Endothelial cell of umbilical vein (primary cell): ENCODE measurements at regions of chr1 and their contacts with region 1.

Region 1: DNA sequence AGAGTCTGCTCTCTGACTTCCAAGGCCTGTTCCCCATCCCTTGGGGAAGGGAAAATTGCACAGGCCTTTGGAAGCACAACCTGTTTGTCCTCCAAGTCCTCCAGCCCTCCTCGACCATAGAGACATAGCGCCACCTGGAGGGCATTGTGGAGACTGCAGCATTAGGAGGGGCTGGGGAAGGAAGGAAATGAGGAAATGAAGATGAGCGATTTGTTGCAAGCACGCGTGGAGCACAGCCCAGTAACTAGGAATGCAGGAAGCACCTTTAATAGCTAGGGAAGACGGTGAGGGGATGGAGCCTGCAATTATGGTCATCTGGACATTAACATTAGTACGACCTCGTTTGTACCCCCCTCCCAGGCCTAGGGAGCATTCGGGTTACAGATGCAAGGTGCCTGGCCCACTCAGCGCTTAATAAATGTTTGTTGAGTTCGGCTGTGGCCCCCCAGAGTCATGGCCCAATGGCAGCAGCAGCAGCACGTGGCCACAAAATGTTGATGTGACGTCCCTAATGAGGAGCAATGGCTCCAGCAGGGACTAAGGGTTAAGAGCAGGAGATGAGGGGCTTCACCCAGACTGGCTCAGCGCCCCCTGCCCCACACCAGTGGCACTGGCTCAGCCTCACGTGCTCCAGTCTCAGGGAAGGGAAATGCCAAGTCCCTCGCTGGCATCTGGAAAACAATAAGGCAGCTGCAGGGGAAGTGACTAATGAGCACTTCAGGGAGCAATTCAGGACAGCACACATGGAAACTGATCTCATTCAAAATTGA is 8.0 kb upstream of the CAMK2N1 start:
- DNase-seq: peak; percentile 98
- H3K4me3 ChIP-seq: peak overlapping the region in 1 of 3 experiments; percentile 13
- H3K27ac ChIP-seq: peak overlapping the region; percentile 90
- H3K4me1 ChIP-seq: peaks cover 23% of the 10 kb centered on the region
- H3K27me3 ChIP-seq: no peaks in the 10 kb centered on the region
- CTCF ChIP-seq: peak; percentile 89 to 96
- POLR2A ChIP-seq: no peak

Region 2: DNA sequence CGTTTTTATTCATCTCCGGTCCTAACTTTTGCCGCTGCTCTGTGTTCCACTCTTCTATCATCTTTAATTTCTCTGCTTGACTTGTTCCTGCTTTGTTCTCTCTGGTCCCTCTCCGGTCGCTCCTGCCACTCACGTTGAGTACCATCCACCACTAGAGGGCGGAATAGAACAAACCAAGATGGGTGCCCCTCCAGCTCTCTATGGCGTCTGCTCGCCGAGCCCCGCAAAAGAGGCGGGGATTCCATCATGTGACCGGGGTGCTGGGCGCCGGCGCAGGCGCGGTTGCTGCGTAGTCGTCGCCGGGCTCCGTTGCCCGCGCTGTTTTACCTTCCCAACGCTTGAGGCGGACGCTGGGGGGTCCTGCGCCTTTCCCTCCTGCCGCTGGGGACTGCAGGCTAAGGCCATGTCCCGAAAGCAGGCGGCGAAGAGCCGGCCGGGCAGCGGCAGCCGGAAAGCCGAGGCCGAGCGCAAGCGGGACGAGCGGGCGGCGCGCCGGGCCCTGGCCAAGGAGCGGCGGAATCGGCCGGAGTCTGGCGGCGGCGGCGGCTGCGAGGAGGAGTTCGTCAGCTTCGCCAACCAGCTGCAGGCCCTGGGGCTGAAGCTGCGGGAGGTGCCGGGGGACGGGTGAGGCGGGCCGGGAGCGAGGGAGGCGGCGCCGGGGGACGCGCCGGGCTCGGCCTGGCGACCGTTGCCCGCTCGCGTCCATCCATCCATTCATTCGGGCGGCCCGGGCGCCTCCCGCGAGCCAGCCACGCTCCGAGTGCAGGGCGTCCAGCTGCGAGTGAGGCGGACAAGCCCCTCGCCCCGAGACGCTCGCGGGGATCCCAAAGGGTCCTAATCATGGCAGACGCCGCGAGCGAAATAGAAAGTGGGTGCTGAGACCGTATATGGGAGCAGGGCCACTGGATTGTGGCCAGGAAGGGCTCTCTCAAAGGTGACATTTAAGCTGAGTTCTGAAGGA is 611.6 kb before region 1 on chr1 and contains the start of gene OTUD3:
- CTCF ChIA-PET with region 1: interaction called, 6 read pairs
- POLR2A ChIA-PET with region 1: no interaction called
- dilution Hi-C with region 1: no loop called
- intact Hi-C with region 1: loop called (anchors 10 kb)
- DNase-seq: peak; percentile 98
- H3K4me3 ChIP-seq: peak within 1 kb of the TSS; percentile 71 to 97 (median 94)
- H3K27ac ChIP-seq: peak within 1 kb of the TSS; percentile 84
- H3K4me1 ChIP-seq: peaks cover 15% of the 10 kb centered on the region
- H3K27me3 ChIP-seq: peaks cover 0 to 2% of the 10 kb centered on the region in 2 experiments
- CTCF ChIP-seq: peak; percentile 87 to 98
- POLR2A ChIP-seq: peak; percentile 70
- total RNA-seq, gene OTUD3: 8.1 and 10.6 TPM in 2 replicates

Region 3: DNA sequence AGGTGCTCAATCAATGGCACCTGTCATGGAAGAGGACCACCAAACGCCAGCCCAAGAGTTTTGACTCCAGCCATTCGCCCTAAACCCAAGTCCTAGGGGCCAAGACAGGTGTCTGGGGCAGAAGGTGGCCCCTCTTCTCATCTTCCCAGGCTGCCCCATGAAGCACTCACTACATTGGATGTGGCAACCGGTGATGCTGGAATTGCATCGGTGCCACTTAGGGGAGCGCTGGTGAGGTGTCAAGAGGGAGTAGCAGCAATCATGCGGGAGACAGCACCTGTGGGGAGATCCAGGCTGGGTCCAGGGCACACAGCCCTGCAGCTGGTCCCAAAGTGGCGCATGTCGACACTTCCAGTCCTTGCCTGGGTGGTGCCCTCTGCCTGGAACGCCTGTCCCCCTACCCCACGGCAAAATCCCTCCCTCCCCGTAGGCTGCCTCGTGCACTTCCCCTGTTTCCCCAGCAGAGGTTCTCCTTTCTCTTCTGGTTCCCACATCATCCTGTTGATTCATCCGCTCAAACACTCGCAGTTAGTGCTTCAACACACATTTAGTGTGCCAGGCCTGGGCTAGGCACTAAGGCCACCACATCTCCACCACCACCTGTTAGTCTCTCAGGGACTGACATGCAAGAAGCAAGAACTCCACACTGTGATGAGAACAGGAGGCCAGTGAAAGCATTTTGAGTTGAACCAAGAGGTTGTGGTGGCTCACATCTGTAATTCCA is 393.2 kb before region 1 on chr1:
- CTCF ChIA-PET with region 1: interaction called, 3 read pairs
- POLR2A ChIA-PET with region 1: no interaction called
- dilution Hi-C with region 1: no loop called
- intact Hi-C with region 1: loop called (anchors 1 kb)
- DNase-seq: peak; percentile 43
- H3K4me3 ChIP-seq: no peak overlapping the region
- H3K27ac ChIP-seq: no peak overlapping the region
- H3K4me1 ChIP-seq: no peaks in the 10 kb centered on the region
- H3K27me3 ChIP-seq: peaks cover 0 to 2% of the 10 kb centered on the region in 2 experiments
- CTCF ChIP-seq: peak; percentile 59 to 71
- POLR2A ChIP-seq: no peak

Region 4: GRCh38 chr1:20194757-20195461 is 299.1 kb before region 1 on chr1:
- CTCF ChIA-PET with region 1: interaction called, 3 read pairs
- POLR2A ChIA-PET with region 1: no interaction called
- dilution Hi-C with region 1: no loop called
- intact Hi-C with region 1: loop called (anchors 1 kb)
- DNase-seq: peak; percentile 57
- H3K4me3 ChIP-seq: no peak overlapping the region
- H3K27ac ChIP-seq: no peak overlapping the region
- H3K4me1 ChIP-seq: no peaks in the 10 kb centered on the region
- H3K27me3 ChIP-seq: peaks cover 7 to 13% of the 10 kb centered on the region in 2 experiments
- CTCF ChIP-seq: peak; percentile 84 to 89
- POLR2A ChIP-seq: no peak

Region 5: GRCh38 chr1:20376880-20377494 is 117.0 kb before region 1 on chr1:
- CTCF ChIA-PET with region 1: interaction called, 60 read pairs
- POLR2A ChIA-PET with region 1: no interaction called
- dilution Hi-C with region 1: no loop called
- intact Hi-C with region 1: loop called (anchors 1 kb)
- DNase-seq: peak; percentile 58
- H3K4me3 ChIP-seq: no peak overlapping the region
- H3K27ac ChIP-seq: no peak overlapping the region
- H3K4me1 ChIP-seq: no peaks in the 10 kb centered on the region
- H3K27me3 ChIP-seq: no peaks in the 10 kb centered on the region
- CTCF ChIP-seq: peak; percentile 73 to 91
- POLR2A ChIP-seq: no peak

Region 6: DNA sequence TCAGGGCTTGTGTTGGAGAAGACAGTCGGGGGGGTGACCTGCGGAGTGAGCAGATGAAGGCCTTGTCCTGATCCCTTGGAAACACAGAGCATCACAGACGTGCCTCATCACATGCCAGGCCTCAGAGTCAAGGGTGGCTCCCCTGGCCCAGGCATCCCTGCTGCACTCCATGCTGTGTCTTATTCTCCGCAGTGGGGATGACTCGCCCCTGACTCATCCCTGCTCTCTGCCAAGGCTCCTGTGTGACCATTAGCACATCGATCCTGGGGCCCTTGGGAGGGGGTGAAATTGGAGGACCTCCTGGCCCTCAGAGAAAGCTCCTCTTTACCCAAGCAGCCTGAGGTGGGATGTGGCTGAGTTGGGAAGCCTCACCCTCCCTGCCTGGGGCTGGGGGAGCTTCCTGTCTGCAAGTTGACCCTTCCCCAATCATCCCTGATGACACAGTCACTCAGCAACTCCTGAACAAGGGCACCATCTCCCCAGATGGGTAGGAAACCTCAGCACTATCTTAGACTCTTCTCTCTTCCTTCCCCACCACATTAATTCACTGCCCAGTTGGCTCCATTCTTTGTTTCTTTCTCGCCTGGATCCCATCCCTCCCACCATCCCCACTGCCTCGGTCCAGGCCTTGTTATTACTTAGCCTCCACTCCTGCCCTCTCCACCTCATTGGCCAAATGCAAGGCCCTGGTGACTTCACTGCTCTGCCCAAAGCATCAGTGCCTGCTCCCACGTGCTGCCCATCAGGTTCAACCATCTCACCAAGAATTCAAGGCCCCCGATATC is 82.6 kb before region 1 on chr1:
- CTCF ChIA-PET with region 1: no interaction called
- POLR2A ChIA-PET with region 1: no interaction called
- dilution Hi-C with region 1: no loop called
- intact Hi-C with region 1: no loop called
- DNase-seq: peak; percentile 47
- H3K4me3 ChIP-seq: no peak overlapping the region
- H3K27ac ChIP-seq: no peak overlapping the region
- H3K4me1 ChIP-seq: peaks cover 2% of the 10 kb centered on the region
- H3K27me3 ChIP-seq: no peaks in the 10 kb centered on the region
- CTCF ChIP-seq: no peak
- POLR2A ChIP-seq: no peak

Region 7: GRCh38 chr1:20507564-20508410 is 13.8 kb after region 1 on chr1 and contains the start of gene MUL1:
- CTCF ChIA-PET with region 1: interaction called, 9 read pairs
- POLR2A ChIA-PET with region 1: no interaction called
- dilution Hi-C with region 1: no loop called
- intact Hi-C with region 1: loop called (anchors 1 kb)
- DNase-seq: peak; percentile 88
- H3K4me3 ChIP-seq: peak within 1 kb of the TSS; percentile 70 to 94 (median 94)
- H3K27ac ChIP-seq: peak within 1 kb of the TSS; percentile 80
- H3K4me1 ChIP-seq: peaks cover 11% of the 10 kb centered on the region
- H3K27me3 ChIP-seq: peaks cover 2 to 3% of the 10 kb centered on the region in 2 experiments
- CTCF ChIP-seq: no peak
- POLR2A ChIP-seq: peak; percentile 79
- total RNA-seq, gene MUL1: 23.9 and 28.3 TPM in 2 replicates

Region 8: GRCh38 chr1:20540281-20540680 is 46.3 kb after region 1 on chr1:
- CTCF ChIA-PET with region 1: no interaction called
- POLR2A ChIA-PET with region 1: no interaction called
- dilution Hi-C with region 1: no loop called
- intact Hi-C with region 1: no loop called
- DNase-seq: no peak
- H3K4me3 ChIP-seq: no peak overlapping the region
- H3K27ac ChIP-seq: no peak overlapping the region
- H3K4me1 ChIP-seq: no peaks in the 10 kb centered on the region
- H3K27me3 ChIP-seq: peaks cover 2 to 4% of the 10 kb centered on the region in 2 experiments
- CTCF ChIP-seq: no peak
- POLR2A ChIP-seq: no peak

Region 9: DNA sequence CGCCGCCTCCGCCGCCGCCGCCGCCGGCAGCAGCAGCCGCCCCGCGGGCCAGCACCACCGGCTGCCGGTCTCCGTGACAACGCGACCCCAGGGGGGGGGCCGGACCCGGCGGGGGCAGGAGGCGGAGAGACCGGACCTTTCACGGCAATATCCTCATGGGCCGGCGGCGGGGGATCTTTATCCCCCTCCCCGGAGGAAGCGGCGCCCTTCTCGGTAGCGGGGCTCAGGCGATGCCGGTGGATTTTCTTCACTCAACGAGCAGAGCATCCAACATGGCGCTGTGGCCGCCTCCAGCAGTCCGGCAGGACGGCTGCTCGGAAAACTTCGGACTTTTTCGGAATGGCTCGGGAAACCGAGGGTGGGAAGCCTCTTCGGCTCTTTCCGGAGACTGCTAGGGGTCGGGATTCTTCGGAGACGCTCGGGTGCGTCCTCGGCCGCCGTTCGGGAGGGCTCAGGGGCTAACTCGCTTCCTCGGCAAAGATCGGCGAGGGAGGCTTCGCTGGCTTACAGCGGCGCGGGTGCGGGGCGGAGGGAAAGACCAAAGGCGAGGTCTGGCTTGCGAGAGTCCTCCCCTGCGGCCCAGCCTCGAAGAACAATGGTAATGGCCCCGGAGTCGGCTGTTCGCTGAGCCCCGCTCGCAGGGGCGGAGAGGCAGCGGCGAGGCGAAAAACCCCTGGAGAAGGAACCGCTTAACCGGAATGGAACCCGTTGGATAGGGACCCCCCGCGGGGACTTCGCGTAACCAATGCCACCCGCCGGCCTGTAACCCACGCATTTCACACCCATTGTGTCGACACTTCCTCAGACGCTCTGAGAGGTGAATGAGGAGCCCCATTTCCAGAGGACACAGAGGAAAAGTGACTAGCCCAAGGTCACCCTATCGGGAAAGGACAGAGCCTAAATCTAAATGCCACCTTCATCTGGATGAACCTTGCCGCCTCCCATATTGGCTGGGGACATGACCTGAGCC is 682.8 kb after region 1 on chr1 and contains the start of gene EIF4G3:
- CTCF ChIA-PET with region 1: no interaction called
- POLR2A ChIA-PET with region 1: no interaction called
- dilution Hi-C with region 1: no loop called
- intact Hi-C with region 1: no loop called
- DNase-seq: peak; percentile 98
- H3K4me3 ChIP-seq: peak within 1 kb of the TSS; percentile 84 to 100 (median 94)
- H3K27ac ChIP-seq: peak within 1 kb of the TSS; percentile 86
- H3K4me1 ChIP-seq: peaks cover 12% of the 10 kb centered on the region
- H3K27me3 ChIP-seq: no peaks in the 10 kb centered on the region
- CTCF ChIP-seq: no peak
- POLR2A ChIP-seq: peak; percentile 76
- total RNA-seq, gene EIF4G3: 78.5 and 84.0 TPM in 2 replicates